ENCODE measurements at regions of chr7 and their contacts with region 1.

Region 1: GRCh38 chr7:100358027-100358865 is at the start of gene PILRB:
- DNase-seq: no peak
- H3K4me3 ChIP-seq: no peak within 1 kb of the TSS
- H3K27ac ChIP-seq: no peak within 1 kb of the TSS
- H3K4me1 ChIP-seq: no peaks in the 10 kb centered on the region
- H3K27me3 ChIP-seq: no peaks in the 10 kb centered on the region
- CTCF ChIP-seq: no peak
- total RNA-seq, gene PILRB: 26.5 and 31.0 TPM in 2 replicates

Region 2: GRCh38 chr7:99971242-99971641 is 387.0 kb before region 1 on chr7:
- CTCF ChIA-PET with region 1: no interaction called
- POLR2A ChIA-PET with region 1: no interaction called
- intact Hi-C with region 1: no loop called
- DNase-seq: no peak
- H3K4me3 ChIP-seq: no peak overlapping the region
- H3K27ac ChIP-seq: no peak overlapping the region
- H3K4me1 ChIP-seq: no peaks in the 10 kb centered on the region
- H3K27me3 ChIP-seq: peaks cover 17% of the 10 kb centered on the region
- CTCF ChIP-seq: no peak

Region 3: GRCh38 chr7:100091411-100092181 is 266.6 kb before region 1 on chr7:
- CTCF ChIA-PET with region 1: no interaction called
- POLR2A ChIA-PET with region 1: interaction called, 11 read pairs
- intact Hi-C with region 1: no loop called
- DNase-seq: peak; percentile 66
- H3K4me3 ChIP-seq: no peak overlapping the region
- H3K27ac ChIP-seq: peak overlapping the region; percentile 24
- H3K4me1 ChIP-seq: peaks cover 40% of the 10 kb centered on the region
- H3K27me3 ChIP-seq: no peaks in the 10 kb centered on the region
- CTCF ChIP-seq: no peak

Measured in A673 (cell line).